Ovary (tissue), 10 donors: ENCODE measurements at regions of chr16 and their contacts with region 1.

Region 1: GRCh38 chr16:25643633-25644032 is 48.1 kb upstream of the HS3ST4 start:
- DNase-seq: no peak
- H3K4me3 ChIP-seq: no peak overlapping the region
- H3K27ac ChIP-seq: no peak overlapping the region
- H3K4me1 ChIP-seq: no peaks in the 10 kb centered on the region
- H3K27me3 ChIP-seq: no peaks in the 10 kb centered on the region
- CTCF ChIP-seq: no peak
- EP300 ChIP-seq: no peak
- POLR2A ChIP-seq: no peak

Region 2: GRCh38 chr16:25580042-25580441 is 63.6 kb before region 1 on chr16:
- intact Hi-C with region 1: loop called in 1 of 4 experiments (anchors 10 kb)
- DNase-seq: no peak
- H3K4me3 ChIP-seq: no peak overlapping the region
- H3K27ac ChIP-seq: no peak overlapping the region
- H3K4me1 ChIP-seq: no peaks in the 10 kb centered on the region
- H3K27me3 ChIP-seq: no peaks in the 10 kb centered on the region
- CTCF ChIP-seq: no peak
- EP300 ChIP-seq: no peak
- POLR2A ChIP-seq: no peak

Region 3: DNA sequence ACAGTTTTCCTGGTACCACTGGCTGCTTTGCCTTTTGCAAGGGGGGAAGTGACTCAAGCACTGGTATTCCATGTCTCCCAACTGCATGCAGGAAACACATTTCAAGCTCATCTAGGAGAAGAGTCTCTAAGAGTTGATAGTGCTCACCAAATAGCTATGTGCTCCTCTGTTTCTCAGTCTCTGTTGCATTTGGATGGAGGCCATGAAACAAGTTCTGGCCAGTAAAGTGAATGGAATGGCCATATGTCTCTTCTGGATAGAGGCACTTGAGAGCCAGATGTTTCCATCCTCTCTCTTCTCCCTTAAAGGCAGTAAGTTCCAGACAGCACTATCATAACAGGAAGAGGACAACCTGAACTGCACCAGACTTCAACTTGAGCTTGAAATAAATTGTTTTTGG is 1483.7 kb after region 1 on chr16:
- intact Hi-C with region 1: no loop called
- DNase-seq: no peak
- H3K4me3 ChIP-seq: no peak overlapping the region
- H3K27ac ChIP-seq: no peak overlapping the region
- H3K4me1 ChIP-seq: no peaks in the 10 kb centered on the region
- H3K27me3 ChIP-seq: no peaks in the 10 kb centered on the region
- CTCF ChIP-seq: no peak
- EP300 ChIP-seq: no peak
- POLR2A ChIP-seq: no peak